PC-9 (cell line): ENCODE measurements at regions of chr19 and their contacts with region 1.

Region 1: DNA sequence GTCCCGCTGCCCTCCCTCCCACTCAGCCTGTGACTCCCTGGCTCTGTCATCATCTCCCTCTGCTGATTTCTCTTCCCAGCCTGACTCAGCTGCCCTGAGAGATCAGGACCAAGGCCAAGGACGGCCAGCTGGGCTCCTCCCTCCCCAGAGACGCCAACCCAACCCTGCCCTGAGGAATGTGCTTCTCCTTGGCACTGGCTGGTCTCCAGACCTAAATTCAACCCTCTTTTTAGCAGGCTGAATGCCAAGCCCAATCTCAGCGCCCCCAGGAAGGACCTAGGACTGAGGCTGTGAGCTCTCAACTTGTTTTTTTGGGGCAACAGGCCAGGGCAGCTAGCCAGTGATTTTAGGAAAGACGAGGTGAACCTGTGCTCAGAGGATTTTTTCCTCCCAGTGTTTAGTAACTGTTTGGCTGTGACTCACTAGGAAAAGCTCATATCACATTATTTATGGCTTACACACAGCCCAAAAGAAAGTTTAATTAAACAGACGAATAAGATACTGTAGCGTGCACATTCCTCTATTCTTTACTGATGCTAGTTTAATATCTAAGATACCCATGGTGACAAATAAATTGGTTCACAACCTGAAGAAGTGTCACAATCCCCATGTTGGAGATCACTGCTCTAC is 7.4 kb upstream of the IGFL1 start:
- DNase-seq: peak; percentile 95 to 99
- H3K4me3 ChIP-seq: no peak overlapping the region
- H3K27ac ChIP-seq: peak overlapping the region; percentile 84
- H3K4me1 ChIP-seq: peaks cover 66% of the 10 kb centered on the region
- H3K27me3 ChIP-seq: no peaks in the 10 kb centered on the region
- CTCF ChIP-seq: no peak

Region 2: DNA sequence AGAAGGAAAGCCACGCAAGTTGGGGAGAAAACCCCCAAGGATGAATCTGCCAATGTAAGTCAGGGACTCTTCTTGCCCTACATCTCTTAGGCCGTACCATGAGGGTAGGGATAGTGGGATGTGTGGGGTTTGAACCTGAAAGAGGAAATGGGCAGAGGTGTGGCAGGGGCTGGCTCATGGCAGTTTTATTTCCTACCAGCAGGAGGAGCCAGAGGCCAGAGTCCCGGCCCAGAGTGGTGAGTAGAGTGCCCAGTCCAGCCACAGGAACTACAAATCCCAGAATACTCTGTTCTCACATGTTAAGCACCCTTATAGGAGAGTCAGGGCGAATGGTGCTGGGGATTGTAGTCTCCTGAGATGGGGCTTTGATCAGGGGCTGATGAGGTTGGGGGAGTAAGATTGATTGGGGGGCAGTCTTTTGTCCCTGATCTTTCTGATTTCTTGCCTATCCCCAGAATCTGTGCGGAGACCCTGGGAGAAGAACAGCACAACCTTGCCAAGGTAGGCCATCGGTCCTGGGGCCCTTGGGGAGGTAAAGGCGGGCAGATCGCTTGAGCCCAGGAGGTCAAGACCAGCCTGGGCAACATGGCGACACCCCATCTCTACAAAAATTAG is 698.3 kb before region 1 on chr19:
- CTCF ChIA-PET with region 1: no interaction called
- POLR2A ChIA-PET with region 1: no interaction called
- intact Hi-C with region 1: no loop called
- DNase-seq: peak; percentile 75 to 81
- H3K4me3 ChIP-seq: no peak overlapping the region
- H3K27ac ChIP-seq: peak overlapping the region; percentile 17; the same call in 1 of the 2 replicates
- H3K4me1 ChIP-seq: peaks cover 36% of the 10 kb centered on the region
- H3K27me3 ChIP-seq: no peaks in the 10 kb centered on the region
- CTCF ChIP-seq: peak; percentile 98

Region 3: GRCh38 chr19:46201413-46202310 is 20.4 kb before region 1 on chr19:
- CTCF ChIA-PET with region 1: no interaction called
- POLR2A ChIA-PET with region 1: interaction called, 4 read pairs
- intact Hi-C with region 1: loop called (anchors 1 kb)
- DNase-seq: peak; percentile 78 to 90
- H3K4me3 ChIP-seq: peak overlapping the region; percentile 65
- H3K27ac ChIP-seq: peak overlapping the region; percentile 97
- H3K4me1 ChIP-seq: peaks cover 85% of the 10 kb centered on the region
- H3K27me3 ChIP-seq: no peaks in the 10 kb centered on the region
- CTCF ChIP-seq: no peak

Region 4: DNA sequence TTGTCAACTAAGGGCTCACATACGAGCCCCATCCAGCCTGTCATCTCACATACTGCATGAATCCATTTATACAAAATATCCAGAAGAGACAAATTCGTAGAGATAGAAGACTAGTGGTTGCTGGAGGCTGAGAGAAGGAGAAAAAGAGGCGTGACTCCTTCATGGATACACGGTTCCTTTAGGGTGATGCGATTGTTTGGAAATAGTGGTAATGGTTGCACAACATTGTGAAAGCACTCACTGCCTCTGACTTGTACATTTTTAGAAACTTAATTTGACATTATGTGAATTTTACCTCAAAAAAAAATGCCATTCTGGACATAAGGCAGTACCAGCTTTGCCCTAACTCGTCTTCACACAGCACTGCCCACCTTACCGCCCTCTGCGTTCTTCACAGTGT is 34.8 kb after region 1 on chr19:
- CTCF ChIA-PET with region 1: interaction called, 3 read pairs
- POLR2A ChIA-PET with region 1: interaction called, 13 read pairs
- intact Hi-C with region 1: loop called (anchors 2 kb)
- DNase-seq: peak in 1 of 2 experiments; percentile 50
- H3K4me3 ChIP-seq: no peak overlapping the region
- H3K27ac ChIP-seq: peak overlapping the region; percentile 49
- H3K4me1 ChIP-seq: peaks cover 75% of the 10 kb centered on the region
- H3K27me3 ChIP-seq: no peaks in the 10 kb centered on the region
- CTCF ChIP-seq: no peak